ENCODE measurements at regions of chr3 and their contacts with region 1.

Region 1: DNA sequence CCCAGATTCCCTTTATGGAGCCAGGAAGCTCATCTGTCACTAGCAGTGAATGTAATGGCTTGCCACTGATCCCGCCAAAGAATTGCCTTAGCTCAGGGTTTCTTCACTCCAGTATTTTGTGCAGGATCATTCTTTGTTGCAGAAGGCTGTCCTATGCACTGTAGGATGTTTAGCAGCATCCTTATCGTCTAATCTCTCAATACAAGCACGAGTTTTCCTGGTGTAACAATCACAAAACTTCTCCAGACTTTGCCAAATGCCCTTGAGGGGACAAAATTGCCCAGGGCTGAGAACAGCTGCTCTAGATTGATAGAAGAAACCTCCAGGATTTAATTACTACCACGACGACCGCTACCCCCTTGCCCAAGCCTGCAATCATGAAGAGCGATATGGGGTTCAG is 6.8 kb upstream of the SHQ1 start:
- DNase-seq: peak; percentile 39
- H3K4me3 ChIP-seq: no peak overlapping the region
- H3K27ac ChIP-seq: no peak overlapping the region
- H3K4me1 ChIP-seq: peaks cover 0 to 5% (median 0%) of the 10 kb centered on the region in 4 donors
- H3K27me3 ChIP-seq: no peaks in the 10 kb centered on the region
- CTCF ChIP-seq: no peak
- EP300 ChIP-seq: no peak
- POLR2A ChIP-seq: no peak

Region 2: DNA sequence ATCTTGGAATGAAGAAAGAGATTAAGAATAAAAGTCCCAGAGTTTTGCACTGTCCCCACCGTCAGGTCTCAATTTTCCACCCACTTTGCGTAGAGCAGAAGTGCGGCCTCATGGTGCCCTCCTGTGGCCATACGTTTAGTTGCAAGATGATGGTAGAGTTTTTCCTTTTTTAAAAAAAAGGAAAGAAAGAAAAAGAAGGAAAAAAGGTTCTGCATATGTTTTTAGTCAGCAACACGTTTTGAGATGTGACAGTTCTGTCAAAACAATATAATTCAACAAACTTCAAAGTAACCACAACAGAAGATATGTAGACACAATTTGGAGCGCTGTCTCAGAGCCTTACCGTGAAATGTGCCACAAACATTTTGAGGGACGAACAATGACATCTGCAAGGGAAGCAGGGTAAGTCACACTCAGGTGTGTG is 231.1 kb after region 1 on chr3:
- intact Hi-C with region 1: loop called (anchors 10 kb)
- DNase-seq: no peak
- H3K4me3 ChIP-seq: peak overlapping the region in 1 of 4 donors; percentile 19
- H3K27ac ChIP-seq: no peak overlapping the region
- H3K4me1 ChIP-seq: peaks cover 0 to 8% (median 4%) of the 10 kb centered on the region in 4 donors
- H3K27me3 ChIP-seq: no peaks in the 10 kb centered on the region
- CTCF ChIP-seq: peak; percentile 75 to 82 (median 77)
- EP300 ChIP-seq: no peak
- POLR2A ChIP-seq: no peak

Measured in esophagus muscularis mucosa (tissue), 4 donors.